T-cell (primary cell): ENCODE measurements at regions of chr12 and their contacts with region 1.

Region 1: DNA sequence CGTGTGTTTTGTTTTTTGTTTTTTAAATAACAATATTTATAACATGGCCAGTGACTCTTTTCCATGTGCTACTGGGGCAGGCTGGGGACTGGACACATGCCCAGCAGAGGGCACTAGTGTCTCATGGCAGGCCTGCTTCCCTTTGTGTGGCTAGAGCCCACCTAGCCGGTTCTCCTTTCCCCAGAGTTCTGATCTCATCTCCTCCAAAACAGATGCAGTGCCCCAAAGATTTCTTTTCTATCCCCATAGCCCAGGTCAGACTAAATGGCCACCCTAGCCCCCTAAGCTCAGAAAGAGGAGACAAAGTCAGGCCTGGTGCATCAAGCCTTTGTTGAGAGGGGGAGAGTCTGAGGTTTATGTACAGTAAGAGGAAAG is 21.2 kb downstream of the PRPF40B start:
- DNase-seq: peak; percentile 63 to 92 (median 79)
- ATAC-seq: peak; percentile 89 to 97 (median 92)
- H3K4me3 ChIP-seq: no peak overlapping the region
- H3K4me3 Mint-ChIP-seq: peak overlapping the region in 1 of 3 donors; percentile 51
- H3K27ac ChIP-seq: peak overlapping the region; percentile 48
- H3K27ac Mint-ChIP-seq: peak overlapping the region; percentile 78 to 88
- H3K4me1 ChIP-seq: peaks cover 8 to 32% of the 10 kb centered on the region in 2 experiments
- H3K4me1 Mint-ChIP-seq: peaks cover 33 to 42% (median 37%) of the 10 kb centered on the region in 3 donors
- H3K27me3 ChIP-seq: no peaks in the 10 kb centered on the region
- H3K27me3 Mint-ChIP-seq: no peaks in the 10 kb centered on the region

Region 2: GRCh38 chr12:48946205-48946604 is 698.4 kb before region 1 on chr12:
- CTCF ChIA-PET with region 1: no interaction called
- POLR2A ChIA-PET with region 1: no interaction called
- DNase-seq: no peak
- ATAC-seq: no peak
- H3K4me3 ChIP-seq: no peak overlapping the region
- H3K4me3 Mint-ChIP-seq: no peak overlapping the region
- H3K27ac ChIP-seq: no peak overlapping the region
- H3K27ac Mint-ChIP-seq: peak overlapping the region in 1 of 2 donors; percentile 53
- H3K4me1 ChIP-seq: peaks cover 0 to 4% of the 10 kb centered on the region in 2 experiments
- H3K4me1 Mint-ChIP-seq: peaks cover 26 to 30% (median 29%) of the 10 kb centered on the region in 3 donors
- H3K27me3 ChIP-seq: no peaks in the 10 kb centered on the region
- H3K27me3 Mint-ChIP-seq: no peaks in the 10 kb centered on the region

Region 3: GRCh38 chr12:49673446-49674317 is 29.1 kb after region 1 on chr12:
- CTCF ChIA-PET with region 1: interaction called, 7 to 12 read pairs
- POLR2A ChIA-PET with region 1: no interaction called
- DNase-seq: peak in 5 of 35 experiments; percentile 10 to 36 (median 27)
- ATAC-seq: peak in 2 of 4 experiments; percentile 29 to 33
- H3K4me3 ChIP-seq: peak overlapping the region in 1 of 2 donors; percentile 5
- H3K4me3 Mint-ChIP-seq: peak overlapping the region; percentile 25 to 65 (median 49)
- H3K27ac ChIP-seq: peak overlapping the region; percentile 91
- H3K27ac Mint-ChIP-seq: peak overlapping the region; percentile 97 to 98
- H3K4me1 ChIP-seq: peaks cover 64 to 69% of the 10 kb centered on the region in 2 experiments
- H3K4me1 Mint-ChIP-seq: peaks cover 85 to 88% (median 87%) of the 10 kb centered on the region in 3 donors
- H3K27me3 ChIP-seq: no peaks in the 10 kb centered on the region
- H3K27me3 Mint-ChIP-seq: no peaks in the 10 kb centered on the region

Region 4: GRCh38 chr12:49687941-49688340 is 43.3 kb after region 1 on chr12:
- CTCF ChIA-PET with region 1: interaction called in 1 of 2 experiments, 5 read pairs
- POLR2A ChIA-PET with region 1: interaction called in 1 of 2 experiments, 11 read pairs
- DNase-seq: no peak
- ATAC-seq: no peak
- H3K4me3 ChIP-seq: no peak overlapping the region
- H3K4me3 Mint-ChIP-seq: no peak overlapping the region
- H3K27ac ChIP-seq: no peak overlapping the region
- H3K27ac Mint-ChIP-seq: peak overlapping the region in 1 of 2 donors; percentile 19
- H3K4me1 ChIP-seq: peaks cover 24 to 25% of the 10 kb centered on the region in 2 experiments
- H3K4me1 Mint-ChIP-seq: peaks cover 60 to 75% (median 62%) of the 10 kb centered on the region in 3 donors
- H3K27me3 ChIP-seq: no peaks in the 10 kb centered on the region
- H3K27me3 Mint-ChIP-seq: no peaks in the 10 kb centered on the region

Region 5: GRCh38 chr12:49707128-49707811 is 62.7 kb after region 1 on chr12 and contains the start of gene FMNL3:
- CTCF ChIA-PET with region 1: interaction called, 36 to 100 read pairs
- POLR2A ChIA-PET with region 1: interaction called in 1 of 2 experiments, 10 read pairs
- DNase-seq: peak; percentile 96 to 100 (median 98)
- ATAC-seq: peak; percentile 95 to 97 (median 96)
- H3K4me3 ChIP-seq: peak within 1 kb of the TSS; percentile 72 to 81
- H3K4me3 Mint-ChIP-seq: peak within 1 kb of the TSS; percentile 91 to 93 (median 92)
- H3K27ac ChIP-seq: peak within 1 kb of the TSS; percentile 67
- H3K27ac Mint-ChIP-seq: peak within 1 kb of the TSS; percentile 85 to 86
- H3K4me1 ChIP-seq: peaks cover 25 to 43% of the 10 kb centered on the region in 2 experiments
- H3K4me1 Mint-ChIP-seq: peaks cover 43 to 49% (median 48%) of the 10 kb centered on the region in 3 donors
- H3K27me3 ChIP-seq: peaks cover 0 to 7% of the 10 kb centered on the region in 2 experiments
- H3K27me3 Mint-ChIP-seq: peaks cover 4 to 8% of the 10 kb centered on the region in 2 donors
- total RNA-seq, gene FMNL3: 34.2 to 45.5 (median 41.1) TPM